ENCODE measurements at regions of chr1 and their contacts with region 1.

Region 1: DNA sequence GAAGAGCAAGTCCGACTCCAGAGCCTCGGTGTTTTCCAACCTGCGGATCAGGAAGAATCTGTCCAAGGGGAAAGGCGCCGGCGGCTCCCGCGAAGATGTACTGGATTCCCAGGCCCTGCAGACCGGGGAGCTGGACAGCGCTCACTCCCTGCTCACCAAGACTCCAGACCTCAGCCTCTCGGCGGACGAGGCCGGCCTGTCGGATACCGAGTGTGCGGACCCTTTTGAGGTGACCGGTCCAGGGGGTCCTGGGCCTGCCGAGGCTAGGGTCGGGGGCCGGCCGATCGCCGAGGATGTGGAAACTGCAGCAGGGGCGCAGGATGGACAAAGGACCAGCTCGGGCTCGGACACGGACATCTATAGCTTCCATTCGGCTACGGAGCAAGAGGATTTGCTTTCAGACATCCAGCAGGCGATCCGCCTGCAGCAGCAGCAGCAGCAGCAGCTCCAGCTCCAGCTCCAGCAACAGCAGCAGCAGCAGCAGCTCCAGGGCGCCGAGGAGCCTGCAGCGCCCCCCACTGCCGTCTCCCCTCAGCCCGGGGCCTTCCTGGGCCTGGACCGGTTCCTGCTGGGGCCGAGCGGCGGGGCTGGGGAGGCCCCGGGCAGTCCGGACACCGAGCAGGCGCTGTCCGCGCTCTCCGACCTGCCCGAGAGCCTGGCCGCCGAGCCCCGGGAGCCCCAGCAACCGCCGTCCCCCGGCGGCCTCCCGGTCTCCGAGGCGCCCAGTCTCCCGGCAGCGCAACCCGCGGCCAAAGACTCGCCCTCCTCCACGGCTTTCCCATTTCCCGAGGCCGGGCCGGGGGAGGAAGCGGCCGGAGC is 827 bp downstream of the FMN2 start:
- DNase-seq: peak; percentile 74
- ATAC-seq: peak; percentile 57
- H3K4me3 ChIP-seq: peak overlapping the region; percentile 89
- H3K27ac ChIP-seq: peak overlapping the region; percentile 33
- H3K4me1 ChIP-seq: peaks cover 2% of the 10 kb centered on the region; the same call in 1 of the 2 replicates
- H3K27me3 ChIP-seq: no peaks in the 10 kb centered on the region
- CTCF ChIP-seq: peak; percentile 35
- POLR2A ChIP-seq: no peak
- RAD21 ChIP-seq: peak; percentile 15; the same call in 1 of the 2 replicates

Region 2: DNA sequence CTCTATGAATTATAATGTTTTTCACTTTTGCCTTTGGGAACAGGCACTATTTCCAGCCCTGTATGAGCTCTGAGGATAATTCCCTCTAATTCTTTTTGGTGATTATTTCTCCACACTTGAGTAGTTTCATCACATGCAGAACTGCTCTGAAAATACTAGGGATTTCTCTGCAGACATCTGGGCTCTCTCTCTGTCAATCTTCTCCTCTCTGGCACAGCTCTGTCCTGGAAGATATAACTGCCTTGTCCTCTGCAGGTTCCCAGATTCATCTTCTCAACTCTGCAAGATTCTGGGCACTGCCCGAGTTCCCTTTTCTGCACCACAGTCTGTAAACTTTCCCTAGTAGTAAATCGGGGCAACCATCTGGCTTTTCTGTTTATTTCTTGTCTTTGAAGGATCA is 132.1 kb before region 1 on chr1:
- CTCF ChIA-PET with region 1: no interaction called
- POLR2A ChIA-PET with region 1: no interaction called
- dilution Hi-C with region 1: no loop called
- in situ Hi-C with region 1: no loop called
- intact Hi-C with region 1: no loop called
- DNase-seq: no peak
- ATAC-seq: no peak
- H3K4me3 ChIP-seq: no peak overlapping the region
- H3K27ac ChIP-seq: no peak overlapping the region
- H3K4me1 ChIP-seq: no peaks in the 10 kb centered on the region
- H3K27me3 ChIP-seq: peaks cover 29% of the 10 kb centered on the region
- CTCF ChIP-seq: no peak
- POLR2A ChIP-seq: no peak
- RAD21 ChIP-seq: no peak

Region 3: GRCh38 chr1:240149484-240150094 is 57.1 kb after region 1 on chr1:
- CTCF ChIA-PET with region 1: interaction called, 4 read pairs
- POLR2A ChIA-PET with region 1: no interaction called
- dilution Hi-C with region 1: no loop called
- in situ Hi-C with region 1: no loop called
- intact Hi-C with region 1: loop called (anchors 1 kb)
- DNase-seq: peak; percentile 52
- ATAC-seq: peak; percentile 63; the same call in 1 of the 2 replicates
- H3K4me3 ChIP-seq: no peak overlapping the region
- H3K27ac ChIP-seq: no peak overlapping the region
- H3K4me1 ChIP-seq: peaks cover 4% of the 10 kb centered on the region; the same call in 1 of the 2 replicates
- H3K27me3 ChIP-seq: no peaks in the 10 kb centered on the region
- CTCF ChIP-seq: peak; percentile 64
- POLR2A ChIP-seq: no peak
- RAD21 ChIP-seq: peak; percentile 54

Region 4: GRCh38 chr1:240285541-240285940 is 193.0 kb after region 1 on chr1:
- CTCF ChIA-PET with region 1: no interaction called
- POLR2A ChIA-PET with region 1: no interaction called
- dilution Hi-C with region 1: no loop called
- in situ Hi-C with region 1: no loop called
- intact Hi-C with region 1: no loop called
- DNase-seq: peak; percentile 65
- ATAC-seq: no peak
- H3K4me3 ChIP-seq: no peak overlapping the region
- H3K27ac ChIP-seq: peak overlapping the region; percentile 13; the same call in 1 of the 2 replicates
- H3K4me1 ChIP-seq: peaks cover 6% of the 10 kb centered on the region
- H3K27me3 ChIP-seq: no peaks in the 10 kb centered on the region
- CTCF ChIP-seq: no peak
- POLR2A ChIP-seq: no peak
- RAD21 ChIP-seq: no peak

Region 5: DNA sequence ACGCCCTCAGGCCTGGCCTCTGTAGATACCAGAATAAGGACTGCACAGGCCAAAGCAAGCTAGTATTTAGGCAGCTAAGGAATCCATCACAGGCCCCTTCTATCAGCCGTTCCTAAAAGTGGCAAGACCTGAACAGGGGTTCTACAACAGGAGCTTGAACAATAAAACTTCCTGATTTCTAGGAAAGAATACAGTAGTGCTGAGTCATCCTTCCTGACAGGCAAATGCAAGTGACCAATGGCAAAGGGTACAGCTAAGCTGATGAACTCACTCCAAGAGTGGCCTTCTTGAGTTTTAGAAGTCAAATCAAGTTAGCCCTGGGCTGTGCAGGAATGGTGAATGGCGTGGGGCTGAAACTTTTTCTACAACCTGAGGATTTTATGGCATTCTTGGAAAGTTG is 406.5 kb after region 1 on chr1:
- CTCF ChIA-PET with region 1: no interaction called
- POLR2A ChIA-PET with region 1: no interaction called
- dilution Hi-C with region 1: no loop called
- in situ Hi-C with region 1: no loop called
- intact Hi-C with region 1: no loop called
- DNase-seq: peak; percentile 76
- ATAC-seq: peak; percentile 63
- H3K4me3 ChIP-seq: no peak overlapping the region
- H3K27ac ChIP-seq: no peak overlapping the region
- H3K4me1 ChIP-seq: peaks cover 9% of the 10 kb centered on the region; the same call in 1 of the 2 replicates
- H3K27me3 ChIP-seq: no peaks in the 10 kb centered on the region
- CTCF ChIP-seq: no peak
- POLR2A ChIP-seq: no peak
- RAD21 ChIP-seq: no peak